ENCODE measurements at regions of chr19 and their contacts with region 1.

Region 1: DNA sequence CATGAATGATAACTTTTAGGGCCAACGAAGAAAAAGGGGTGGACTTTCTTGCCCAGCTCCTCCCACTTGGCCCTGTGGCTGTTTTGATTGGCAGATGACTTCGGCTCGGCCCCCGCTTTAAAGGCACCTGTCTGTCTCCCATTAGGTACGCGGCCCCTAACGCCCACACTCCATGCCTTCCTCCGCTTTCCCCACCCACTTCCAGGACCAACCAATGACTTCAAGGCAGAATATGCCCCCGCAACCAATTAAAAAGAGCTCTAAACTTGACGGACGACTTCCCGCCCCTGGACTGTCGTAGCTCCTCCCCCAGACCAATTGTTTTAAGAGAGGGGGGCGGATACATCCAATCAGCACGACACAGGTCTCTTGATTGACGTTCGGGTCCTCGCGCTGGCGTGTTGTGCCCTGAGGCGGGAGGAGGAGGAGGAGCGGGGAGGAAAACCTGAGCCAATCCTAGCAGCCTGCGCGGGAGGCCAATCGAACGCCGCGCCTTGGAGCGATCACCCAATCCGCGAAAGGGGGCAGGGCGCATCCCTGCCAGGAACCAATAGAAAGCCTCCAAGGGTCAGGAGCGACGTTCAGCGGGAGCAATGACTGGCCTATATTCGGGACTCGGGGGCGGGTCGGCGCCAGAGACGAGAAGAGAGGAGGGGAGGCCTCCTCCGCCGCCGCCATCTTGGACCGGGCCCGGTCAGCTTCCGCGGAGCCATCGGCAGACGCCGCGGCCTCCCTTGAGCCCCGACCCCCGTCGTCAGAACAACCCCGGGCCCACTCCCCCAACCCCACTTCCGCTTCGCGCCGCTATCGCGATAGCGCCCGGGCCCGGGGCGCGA is at the start of gene CNOT3:
- DNase-seq: peak; percentile 100
- H3K4me3 Mint-ChIP-seq: peak within 1 kb of the TSS; percentile 95
- H3K27ac Mint-ChIP-seq: peak within 1 kb of the TSS; percentile 92
- H3K4me1 Mint-ChIP-seq: peaks cover 32% of the 10 kb centered on the region
- H3K27me3 Mint-ChIP-seq: no peaks in the 10 kb centered on the region
- total RNA-seq, gene CNOT3: 61.6 and 67.5 TPM in 2 replicates

Region 2: DNA sequence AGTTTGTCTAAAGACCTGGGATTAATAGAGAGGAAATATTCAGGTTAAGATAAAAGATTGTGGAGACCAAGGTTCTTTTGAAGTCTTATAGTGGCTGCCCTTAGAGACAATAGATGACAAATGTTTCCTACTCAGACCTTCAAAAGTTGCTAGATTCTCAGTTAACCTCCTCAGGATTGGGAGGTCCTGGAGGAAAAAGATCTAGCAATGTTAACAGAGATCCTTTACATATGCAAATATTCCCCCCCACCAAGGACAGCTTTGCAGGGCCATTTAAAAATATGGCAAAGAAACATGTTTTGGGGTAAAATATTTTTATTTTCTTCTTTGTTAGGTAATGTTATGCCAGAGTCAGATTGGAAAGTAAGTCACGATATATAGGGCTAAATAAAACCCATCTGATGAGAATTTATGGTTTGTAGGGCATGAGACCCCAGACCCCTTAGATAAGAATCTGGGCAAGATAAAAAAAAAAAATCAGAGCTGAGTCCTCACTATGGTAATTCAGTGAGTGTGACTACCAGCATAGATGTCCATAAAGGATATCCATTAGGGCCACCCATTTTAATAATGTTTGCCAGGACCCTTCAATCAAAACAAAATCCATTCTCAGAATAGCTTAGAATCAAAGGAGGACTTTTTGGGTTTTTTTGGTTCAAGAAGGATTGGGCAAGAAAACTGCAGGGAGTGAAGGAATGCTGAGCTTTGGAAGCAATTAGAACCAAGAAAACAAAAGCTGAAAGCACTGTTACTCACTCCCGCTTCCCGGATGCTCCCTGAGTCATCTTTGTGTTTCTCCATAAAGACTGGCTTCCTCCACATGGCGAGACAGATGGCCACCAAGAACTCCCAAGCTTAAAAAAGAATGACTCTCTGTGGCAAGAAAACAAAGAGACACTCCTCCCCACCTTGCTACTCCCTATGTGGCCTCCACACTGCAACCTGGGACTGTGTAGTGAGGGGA is 101.8 kb before region 1 on chr19:
- intact Hi-C with region 1: no loop called
- DNase-seq: no peak
- H3K4me3 Mint-ChIP-seq: no peak overlapping the region
- H3K27ac Mint-ChIP-seq: no peak overlapping the region
- H3K4me1 Mint-ChIP-seq: no peaks in the 10 kb centered on the region
- H3K27me3 Mint-ChIP-seq: peaks cover 2% of the 10 kb centered on the region

Region 3: DNA sequence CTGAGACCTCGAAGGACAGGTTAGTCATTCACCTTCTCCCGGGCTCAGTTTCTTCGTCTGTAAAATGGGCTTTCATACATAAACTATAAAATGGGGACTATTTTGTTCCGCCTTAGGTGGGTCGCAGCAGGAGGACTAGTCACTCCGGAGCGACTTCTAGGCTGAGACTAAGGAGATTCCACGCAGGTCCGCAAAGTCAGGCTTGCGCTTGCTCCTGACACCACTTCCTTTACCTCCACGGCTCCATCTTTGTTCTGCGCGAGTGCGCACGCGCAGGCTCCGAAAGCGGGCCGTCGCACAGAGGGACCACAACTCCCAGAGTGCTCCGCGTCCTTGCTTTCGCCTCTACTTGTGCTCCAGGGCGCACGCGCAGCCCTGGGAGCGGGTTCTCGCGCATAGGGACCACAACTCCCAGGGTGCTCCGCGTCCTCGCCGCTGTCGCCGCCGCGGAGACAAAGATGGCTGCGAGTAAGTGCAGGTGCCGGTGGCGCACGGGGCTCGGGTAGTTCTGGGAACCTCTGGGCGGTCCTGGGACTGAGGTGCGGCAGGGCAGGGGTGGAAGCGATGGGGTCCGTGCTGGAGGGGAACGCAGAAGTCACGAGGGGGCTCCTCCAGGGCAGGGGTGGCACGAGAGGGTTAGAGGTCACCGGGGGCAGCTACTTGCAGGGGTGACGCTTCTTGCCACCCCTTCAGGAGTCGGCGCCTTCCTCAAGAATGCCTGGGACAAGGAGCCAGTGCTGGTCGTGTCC is 34.7 kb before region 1 on chr19 and contains the start of gene NDUFA3:
- intact Hi-C with region 1: loop called (anchors 1 kb)
- DNase-seq: peak; percentile 98
- H3K4me3 Mint-ChIP-seq: peak within 1 kb of the TSS; percentile 91
- H3K27ac Mint-ChIP-seq: peak within 1 kb of the TSS; percentile 79
- H3K4me1 Mint-ChIP-seq: peaks cover 8% of the 10 kb centered on the region
- H3K27me3 Mint-ChIP-seq: peaks cover 3% of the 10 kb centered on the region
- total RNA-seq, gene NDUFA3: 105 and 115 TPM in 2 replicates

Region 4: GRCh38 chr19:54115109-54116063 is 21.9 kb before region 1 on chr19 and contains the starts of genes PRPF31 and TFPT:
- intact Hi-C with region 1: loop called (anchors 1 kb)
- DNase-seq: peak; percentile 94
- H3K4me3 Mint-ChIP-seq: peak within 1 kb of the TSS; percentile 97
- H3K27ac Mint-ChIP-seq: peak within 1 kb of the TSS; percentile 92
- H3K4me1 Mint-ChIP-seq: peaks cover 21% of the 10 kb centered on the region
- H3K27me3 Mint-ChIP-seq: no peaks in the 10 kb centered on the region
- total RNA-seq, gene PRPF31: 90.6 and 94.2 TPM in 2 replicates
- total RNA-seq, gene TFPT: 29.3 TPM in 2 replicates

Region 5: GRCh38 chr19:54189735-54190502 is 52.6 kb after region 1 on chr19:
- intact Hi-C with region 1: loop called (anchors 1 kb)
- DNase-seq: peak; percentile 100
- H3K4me3 Mint-ChIP-seq: peak overlapping the region; percentile 89
- H3K27ac Mint-ChIP-seq: peak overlapping the region; percentile 98
- H3K4me1 Mint-ChIP-seq: peaks cover 26% of the 10 kb centered on the region
- H3K27me3 Mint-ChIP-seq: no peaks in the 10 kb centered on the region

Region 6: GRCh38 chr19:54282686-54283470 is 145.6 kb after region 1 on chr19:
- intact Hi-C with region 1: no loop called
- DNase-seq: no peak
- H3K4me3 Mint-ChIP-seq: no peak overlapping the region
- H3K27ac Mint-ChIP-seq: no peak overlapping the region
- H3K4me1 Mint-ChIP-seq: no peaks in the 10 kb centered on the region
- H3K27me3 Mint-ChIP-seq: peaks cover 32% of the 10 kb centered on the region

Region 7: DNA sequence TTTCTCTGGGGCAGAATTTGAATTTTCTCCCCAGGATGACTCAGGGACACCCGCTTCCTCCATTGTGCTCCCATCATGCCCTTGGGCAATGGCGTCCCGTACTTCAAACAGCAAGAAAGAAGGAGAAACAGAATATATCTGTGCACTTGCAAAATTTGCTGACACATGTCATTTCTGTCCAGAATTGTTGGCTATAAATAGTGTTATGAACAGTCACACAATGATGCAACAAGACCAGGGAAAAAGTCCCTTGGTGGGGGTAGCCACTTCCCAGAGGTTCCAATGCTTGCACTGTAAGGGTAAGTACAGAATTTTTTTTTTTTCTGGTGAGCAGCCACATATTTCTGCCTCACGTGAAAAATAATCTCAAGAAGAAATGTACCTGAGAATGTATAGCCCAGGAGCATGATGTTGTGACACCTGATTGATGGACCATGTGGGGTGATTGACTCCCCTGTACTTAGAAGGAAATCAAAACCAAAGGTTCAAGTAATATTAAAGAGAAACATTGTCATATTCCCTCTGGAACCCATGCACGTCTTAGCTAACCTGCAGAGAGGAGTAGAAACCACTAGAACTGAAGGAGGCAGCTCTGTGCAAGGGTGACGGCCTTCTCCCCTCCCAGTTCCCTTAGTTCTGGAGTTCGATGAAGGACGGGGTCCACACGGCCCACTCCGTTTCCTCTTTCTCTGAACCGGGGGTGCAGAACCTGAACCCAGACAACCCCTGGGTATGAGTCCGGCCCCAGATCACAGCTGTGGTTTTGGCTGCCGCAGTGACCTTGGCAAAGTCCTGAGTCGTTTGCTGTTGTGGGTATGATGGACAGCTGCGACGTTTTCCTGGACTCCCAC is 236.7 kb after region 1 on chr19:
- intact Hi-C with region 1: loop called (anchors 1 kb)
- DNase-seq: no peak
- H3K4me3 Mint-ChIP-seq: peak overlapping the region; percentile 79
- H3K27ac Mint-ChIP-seq: no peak overlapping the region
- H3K4me1 Mint-ChIP-seq: peaks cover 73% of the 10 kb centered on the region
- H3K27me3 Mint-ChIP-seq: peaks cover 25% of the 10 kb centered on the region